ENCODE measurements at regions of chrX and their contacts with region 1.

Region 1: DNA sequence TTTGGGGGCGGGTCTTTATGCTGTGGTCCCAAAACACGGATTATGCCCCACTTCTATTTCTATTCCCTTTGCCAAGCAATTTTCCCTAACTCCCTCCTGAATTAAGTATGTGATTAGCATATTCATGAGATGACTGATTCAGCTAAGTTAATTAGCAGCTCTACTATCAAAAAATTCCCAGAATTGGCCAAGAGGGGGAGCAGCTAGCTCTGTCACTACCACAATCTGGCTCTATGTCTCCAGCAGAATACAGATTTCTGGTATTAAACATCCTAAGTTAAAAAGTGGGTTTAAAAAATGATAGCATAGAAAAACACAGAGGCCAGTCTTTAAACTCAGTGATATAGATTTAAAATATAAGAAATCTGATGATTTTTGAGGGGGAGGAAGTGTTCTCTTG is 80.3 kb downstream of the GPC4 start:
- DNase-seq: peak; percentile 20
- ATAC-seq: no peak
- H3K4me3 Mint-ChIP-seq: no peak overlapping the region
- H3K27ac Mint-ChIP-seq: no peak overlapping the region
- H3K4me1 Mint-ChIP-seq: no peaks in the 10 kb centered on the region
- H3K27me3 Mint-ChIP-seq: no peaks in the 10 kb centered on the region

Region 2: DNA sequence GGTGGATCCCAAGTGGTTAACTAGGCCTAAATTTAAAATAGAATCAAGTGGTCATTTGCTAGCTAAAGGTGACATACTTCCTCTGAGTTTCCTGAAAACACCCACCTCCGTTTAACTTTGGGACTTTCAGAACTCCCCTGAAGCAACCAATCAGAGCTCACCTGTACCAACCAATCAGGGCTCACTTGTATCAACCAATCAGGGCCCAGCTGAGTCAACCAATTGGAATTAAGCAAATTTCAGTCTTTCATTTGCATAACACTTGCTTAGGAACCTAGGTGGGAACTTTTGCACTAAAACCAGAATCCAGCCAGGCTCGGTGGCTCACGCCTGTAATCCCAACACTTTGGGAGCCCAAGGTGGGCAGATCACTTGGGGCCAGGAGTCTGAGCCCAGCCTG is 64.4 kb after region 1 on chrX:
- CTCF ChIA-PET with region 1: no interaction called
- POLR2A ChIA-PET with region 1: no interaction called
- DNase-seq: no peak
- ATAC-seq: no peak
- H3K4me3 Mint-ChIP-seq: no peak overlapping the region
- H3K27ac Mint-ChIP-seq: no peak overlapping the region
- H3K4me1 Mint-ChIP-seq: peaks cover 6% of the 10 kb centered on the region
- H3K27me3 Mint-ChIP-seq: no peaks in the 10 kb centered on the region

Region 3: GRCh38 chrX:133495464-133496391 is 160.7 kb after region 1 on chrX:
- CTCF ChIA-PET with region 1: no interaction called
- POLR2A ChIA-PET with region 1: no interaction called
- DNase-seq: no peak
- ATAC-seq: no peak
- H3K4me3 Mint-ChIP-seq: no peak overlapping the region
- H3K27ac Mint-ChIP-seq: no peak overlapping the region
- H3K4me1 Mint-ChIP-seq: no peaks in the 10 kb centered on the region
- H3K27me3 Mint-ChIP-seq: no peaks in the 10 kb centered on the region

Region 4: GRCh38 chrX:133670383-133670782 is 335.4 kb after region 1 on chrX:
- CTCF ChIA-PET with region 1: interaction called, 14 read pairs
- POLR2A ChIA-PET with region 1: no interaction called
- DNase-seq: peak; percentile 20
- ATAC-seq: no peak
- H3K4me3 Mint-ChIP-seq: no peak overlapping the region
- H3K27ac Mint-ChIP-seq: no peak overlapping the region
- H3K4me1 Mint-ChIP-seq: no peaks in the 10 kb centered on the region
- H3K27me3 Mint-ChIP-seq: no peaks in the 10 kb centered on the region

Measured in activated CD8-positive, alpha-beta T cell treated with anti-CD3 and anti-CD28 coated beads, Interleukin-2, amount 10 ng/mL, durations not matched to agents 7 days and 5 days (primary cell).